ENCODE measurements at regions of chr17 and their contacts with region 1.

Region 1: DNA sequence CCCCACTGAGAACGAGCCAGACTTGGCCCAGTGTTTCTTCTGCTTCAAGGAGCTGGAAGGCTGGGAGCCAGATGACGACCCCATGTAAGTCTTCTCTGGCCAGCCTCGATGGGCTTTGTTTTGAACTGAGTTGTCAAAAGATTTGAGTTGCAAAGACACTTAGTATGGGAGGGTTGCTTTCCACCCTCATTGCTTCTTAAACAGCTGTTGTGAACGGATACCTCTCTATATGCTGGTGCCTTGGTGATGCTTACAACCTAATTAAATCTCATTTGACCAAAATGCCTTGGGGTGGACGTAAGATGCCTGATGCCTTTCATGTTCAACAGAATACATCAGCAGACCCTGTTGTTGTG is 631 bp downstream of the BIRC5 start:
- DNase-seq: no peak
- H3K4me3 ChIP-seq: peak overlapping the region; percentile 67 to 85 (median 76)
- H3K27ac ChIP-seq: peak overlapping the region; percentile 64
- H3K4me1 ChIP-seq: peaks cover 8% of the 10 kb centered on the region
- H3K27me3 ChIP-seq: no peaks in the 10 kb centered on the region
- CTCF ChIP-seq: no peak

Region 2: GRCh38 chr17:78019367-78019975 is 195.2 kb before region 1 on chr17:
- CTCF ChIA-PET with region 1: no interaction called
- dilution Hi-C with region 1: no loop called
- in situ Hi-C with region 1: no loop called
- intact Hi-C with region 1: no loop called
- DNase-seq: no peak
- H3K4me3 ChIP-seq: no peak overlapping the region
- H3K27ac ChIP-seq: no peak overlapping the region
- H3K4me1 ChIP-seq: no peaks in the 10 kb centered on the region
- H3K27me3 ChIP-seq: no peaks in the 10 kb centered on the region
- CTCF ChIP-seq: peak; percentile 50 to 66

Region 3: GRCh38 chr17:78186692-78187595 is 27.7 kb before region 1 on chr17 and contains the starts of genes AFMID and TK1:
- CTCF ChIA-PET with region 1: interaction called, 8 read pairs
- dilution Hi-C with region 1: no loop called
- in situ Hi-C with region 1: no loop called
- intact Hi-C with region 1: loop called (anchors 1 kb)
- DNase-seq: peak; percentile 97
- H3K4me3 ChIP-seq: peak within 1 kb of the TSS; percentile 66 to 75 (median 71)
- H3K27ac ChIP-seq: peak within 1 kb of the TSS; percentile 57
- H3K4me1 ChIP-seq: peaks cover 13% of the 10 kb centered on the region
- H3K27me3 ChIP-seq: no peaks in the 10 kb centered on the region
- CTCF ChIP-seq: peak; percentile 43 to 86
- total RNA-seq, gene AFMID: 16.5 to 32.5 TPM
- total RNA-seq, gene TK1: 7.7 to 79.5 TPM